Ascending aorta (tissue), 2 donors: ENCODE measurements at regions of chr12 and their contacts with region 1.

Region 1: DNA sequence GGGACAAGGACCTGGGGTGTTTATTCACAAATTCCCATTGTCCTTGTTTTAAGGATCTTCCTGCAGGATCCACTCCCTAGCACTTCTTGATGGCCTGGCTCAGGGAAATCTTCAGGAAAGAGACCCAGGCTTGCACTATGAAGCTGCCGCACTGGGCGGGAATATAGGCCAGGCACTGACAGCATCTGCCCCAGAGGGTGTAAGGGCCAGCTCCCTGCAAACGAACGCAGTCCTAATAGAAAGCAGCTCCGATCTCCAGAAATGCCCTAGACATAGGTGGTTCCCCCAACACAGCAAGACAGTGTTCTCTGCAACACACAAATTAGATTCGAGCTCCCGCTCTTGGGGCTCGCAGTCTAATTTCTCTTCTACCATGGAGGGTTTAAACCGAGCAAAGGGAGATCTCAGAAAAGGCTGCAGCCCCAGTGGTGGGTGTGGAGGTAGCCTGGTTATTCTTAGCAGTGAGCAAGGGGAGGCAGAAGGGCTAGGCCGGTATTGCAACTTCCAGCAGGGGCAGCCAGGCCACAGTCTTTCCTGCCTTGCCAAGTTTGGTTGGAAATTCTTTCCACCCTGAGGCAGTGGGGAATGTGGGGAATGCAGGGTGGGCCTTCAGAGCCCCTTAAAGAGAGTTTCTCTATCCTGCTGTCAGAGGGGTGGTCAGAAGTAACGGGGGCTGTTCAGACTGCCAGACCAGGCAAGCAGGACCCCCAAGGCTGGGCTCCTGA is 16.1 kb upstream of the WSCD2 start:
- DNase-seq: peak in 1 of 2 donors; percentile 65
- H3K4me3 ChIP-seq: no peak overlapping the region
- H3K27ac ChIP-seq: peak overlapping the region; percentile 58 to 71
- H3K4me1 ChIP-seq: peaks cover 0 to 18% of the 10 kb centered on the region in 2 donors
- H3K27me3 ChIP-seq: no peaks in the 10 kb centered on the region
- CTCF ChIP-seq: peak in 1 of 3 experiments; percentile 14

Region 2: DNA sequence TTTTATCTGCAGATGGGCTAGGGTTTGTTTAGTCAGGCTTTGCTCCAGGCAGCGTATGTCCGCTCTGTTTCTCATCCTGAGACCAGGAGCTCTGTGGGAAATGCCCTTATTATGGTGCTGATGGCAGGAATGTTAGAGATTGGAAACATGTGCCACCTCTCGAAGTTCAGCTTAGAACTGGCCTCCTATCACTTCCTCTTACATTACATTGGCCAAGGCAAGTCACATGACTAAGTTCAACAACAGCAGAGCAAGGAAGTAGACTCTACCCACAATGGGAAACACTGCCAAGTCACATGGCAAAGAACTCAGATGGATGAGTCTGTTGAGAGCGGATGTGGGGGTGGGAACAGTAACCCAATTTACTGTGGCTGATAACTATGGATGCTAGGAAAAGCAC is 145.8 kb before region 1 on chr12:
- intact Hi-C with region 1: no loop called
- DNase-seq: no peak
- H3K4me3 ChIP-seq: no peak overlapping the region
- H3K27ac ChIP-seq: no peak overlapping the region
- H3K4me1 ChIP-seq: no peaks in the 10 kb centered on the region
- H3K27me3 ChIP-seq: no peaks in the 10 kb centered on the region
- CTCF ChIP-seq: no peak

Region 3: DNA sequence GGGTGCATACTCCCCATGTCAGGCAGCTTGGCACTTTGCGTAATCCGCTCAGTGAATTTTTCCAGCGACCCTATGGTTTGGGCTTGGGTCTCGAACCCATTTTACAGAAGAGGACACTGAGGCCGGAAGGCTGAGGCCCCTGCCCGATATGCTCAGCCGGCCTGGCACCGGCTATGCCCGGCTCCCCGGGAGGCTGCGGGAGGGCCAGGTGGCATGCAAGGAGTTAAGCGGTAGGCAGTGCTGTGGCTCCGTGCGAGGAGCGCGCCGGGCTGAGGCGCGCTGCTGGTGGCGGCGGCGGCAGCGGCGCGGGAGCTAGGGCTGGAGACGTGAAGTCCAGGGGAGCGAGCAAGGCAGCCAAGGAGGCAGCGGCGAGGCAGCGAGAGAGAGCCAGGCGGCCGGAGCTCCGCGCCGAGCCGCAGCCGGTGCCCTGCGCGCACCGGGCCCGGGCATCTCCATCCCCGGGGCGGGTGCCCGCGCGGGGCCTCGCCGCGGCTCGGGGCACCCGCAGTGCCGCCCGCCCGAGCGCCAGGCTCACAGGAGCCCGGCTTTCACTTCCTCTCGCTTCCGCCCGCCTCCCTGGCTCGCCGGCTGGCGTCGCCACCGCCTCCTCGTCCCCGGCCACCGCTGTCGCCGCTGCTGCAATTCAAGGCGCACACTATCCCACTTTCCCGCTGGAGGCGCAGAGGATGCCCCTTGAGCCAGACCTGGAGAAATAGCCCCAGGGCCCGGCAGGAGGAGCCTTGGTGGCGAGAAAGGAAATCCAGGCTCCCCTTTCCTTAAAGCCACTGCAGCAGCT is 16.2 kb after region 1 on chr12 and contains the start of gene WSCD2:
- intact Hi-C with region 1: loop called (anchors 1 kb)
- DNase-seq: peak; percentile 12 to 80
- H3K4me3 ChIP-seq: peak within 1 kb of the TSS; percentile 56 to 82
- H3K27ac ChIP-seq: peak within 1 kb of the TSS; percentile 81
- H3K4me1 ChIP-seq: peaks cover 10% of the 10 kb centered on the region in 2 donors
- H3K27me3 ChIP-seq: no peaks in the 10 kb centered on the region
- CTCF ChIP-seq: peak in 2 of 3 experiments; percentile 49 to 50
- total RNA-seq, gene WSCD2: 3.5 TPM